GM18951 (cell line): ENCODE measurements at regions of chr2 and their contacts with region 1.

Region 1: GRCh38 chr2:181573140-181573736 is 83.7 kb downstream of the CERKL start:
- POLR2A ChIP-seq: no peak

Region 2: DNA sequence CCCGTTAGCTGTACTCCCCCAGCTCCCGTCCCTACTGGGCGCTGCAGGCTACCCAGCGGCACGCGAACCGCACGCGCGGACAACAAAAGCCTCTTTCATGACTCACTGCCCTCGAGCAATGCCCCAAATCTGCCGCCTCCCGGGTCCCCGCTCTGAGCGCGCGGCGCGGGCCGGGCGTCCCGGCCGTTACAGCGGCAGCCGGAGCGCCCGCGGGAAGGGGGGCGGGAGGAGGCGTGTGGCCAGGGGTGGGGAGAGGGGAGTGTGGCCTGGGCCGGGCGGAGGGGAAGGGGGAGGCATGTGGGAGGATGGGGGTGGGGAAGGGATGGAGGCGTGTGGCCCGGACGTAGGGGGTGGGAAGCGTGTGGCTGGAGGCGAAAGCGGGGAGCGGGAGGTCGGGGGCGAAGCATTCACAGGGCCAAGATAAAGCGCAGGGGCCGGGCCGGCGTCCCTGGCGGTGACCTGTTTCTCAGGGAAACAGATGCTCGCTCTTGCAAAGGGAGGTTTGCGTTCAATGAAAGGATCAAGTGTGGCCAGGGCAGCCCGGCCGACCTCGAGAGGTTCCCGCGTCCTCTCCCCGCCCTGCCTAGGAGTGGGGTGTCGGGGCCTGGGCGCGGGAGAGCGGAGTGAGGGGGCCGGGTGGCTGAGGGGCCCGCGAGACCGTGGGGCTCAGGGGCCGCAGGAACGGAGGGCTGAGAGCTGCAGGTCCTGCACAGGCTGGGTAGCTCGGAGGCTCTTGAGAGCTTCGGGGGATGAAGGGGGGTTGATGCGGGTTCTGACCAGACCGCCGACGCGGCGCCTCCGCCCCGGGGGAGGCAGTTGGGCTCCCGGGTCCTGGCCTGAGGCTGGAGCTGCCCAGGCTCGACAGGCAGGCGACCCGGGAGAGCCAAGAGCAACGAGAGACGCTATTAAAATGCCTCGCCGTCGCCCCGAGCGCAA is 110.5 kb after region 1 on chr2:
- in situ Hi-C with region 1: loop called (anchors 10 kb)
- POLR2A ChIP-seq: no peak

Region 3: GRCh38 chr2:181891966-181892798 is 318.9 kb after region 1 on chr2:
- in situ Hi-C with region 1: no loop called
- POLR2A ChIP-seq: peak; percentile 60